ENCODE measurements at regions of chr3 and their contacts with region 1.

Region 1: DNA sequence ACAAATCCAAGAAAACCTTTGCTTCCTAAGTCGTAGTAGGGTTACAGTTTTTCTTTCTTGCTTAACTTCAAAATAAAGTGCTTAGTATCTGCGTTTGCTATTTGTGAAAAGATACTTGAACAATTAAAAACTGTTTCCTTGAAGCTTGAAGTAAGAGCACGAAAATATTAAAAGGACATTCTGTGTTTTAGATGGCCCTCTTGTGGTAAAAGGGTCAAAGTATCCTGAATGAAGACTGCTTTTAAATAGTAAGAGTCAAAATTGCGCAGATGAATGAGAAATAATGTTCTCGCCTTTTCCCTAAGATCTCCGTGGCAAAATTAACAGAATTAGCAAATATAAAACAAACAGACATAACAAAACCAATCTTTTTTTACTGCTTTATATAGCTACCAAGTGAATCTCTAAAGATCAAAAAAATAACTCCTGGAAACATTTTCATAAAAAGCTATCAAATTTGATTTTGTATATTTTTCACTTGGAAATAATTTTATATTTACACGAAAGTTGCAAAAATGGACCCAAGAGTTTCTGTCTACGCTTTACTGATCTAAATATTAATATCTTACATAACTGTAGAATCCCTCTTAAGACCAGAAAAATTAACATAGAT is 175.4 kb downstream of the MBNL1 start:
- DNase-seq: peak; percentile 42
- ATAC-seq: peak; percentile 42; the same call in 1 of the 3 replicates
- H3K4me3 ChIP-seq: no peak overlapping the region
- H3K27ac ChIP-seq: no peak overlapping the region
- H3K4me1 ChIP-seq: no peaks in the 10 kb centered on the region
- H3K27me3 ChIP-seq: no peaks in the 10 kb centered on the region
- CTCF ChIP-seq: peak; percentile 65
- EP300 ChIP-seq: no peak
- POLR2A ChIP-seq: no peak
- RAD21 ChIP-seq: peak; percentile 34; the same call in 1 of the 2 replicates

Region 2: GRCh38 chr3:152071924-152072323 is 372.2 kb before region 1 on chr3:
- CTCF ChIA-PET with region 1: no interaction called
- POLR2A ChIA-PET with region 1: no interaction called
- in situ Hi-C with region 1: no loop called
- intact Hi-C with region 1: loop called (anchors 1 kb)
- DNase-seq: peak; percentile 19
- ATAC-seq: peak; percentile 77
- H3K4me3 ChIP-seq: no peak overlapping the region
- H3K27ac ChIP-seq: no peak overlapping the region
- H3K4me1 ChIP-seq: no peaks in the 10 kb centered on the region
- H3K27me3 ChIP-seq: no peaks in the 10 kb centered on the region
- CTCF ChIP-seq: peak; percentile 54
- EP300 ChIP-seq: no peak
- POLR2A ChIP-seq: no peak
- RAD21 ChIP-seq: no peak

Region 3: GRCh38 chr3:152183473-152183872 is 260.7 kb before region 1 on chr3:
- CTCF ChIA-PET with region 1: interaction called, 28 read pairs
- POLR2A ChIA-PET with region 1: no interaction called
- in situ Hi-C with region 1: loop called (anchors 10 kb)
- intact Hi-C with region 1: loop called (anchors 1 kb)
- DNase-seq: peak; percentile 54
- ATAC-seq: peak; percentile 96
- H3K4me3 ChIP-seq: no peak overlapping the region
- H3K27ac ChIP-seq: no peak overlapping the region
- H3K4me1 ChIP-seq: no peaks in the 10 kb centered on the region
- H3K27me3 ChIP-seq: no peaks in the 10 kb centered on the region
- CTCF ChIP-seq: peak; percentile 80
- EP300 ChIP-seq: no peak
- POLR2A ChIP-seq: no peak
- RAD21 ChIP-seq: peak; percentile 86

Region 4: GRCh38 chr3:152229692-152230091 is 214.4 kb before region 1 on chr3:
- CTCF ChIA-PET with region 1: interaction called, 6 read pairs
- POLR2A ChIA-PET with region 1: no interaction called
- in situ Hi-C with region 1: no loop called
- intact Hi-C with region 1: loop called (anchors 1 kb)
- DNase-seq: peak; percentile 18
- ATAC-seq: peak; percentile 60; the same call in 2 of the 3 replicates
- H3K4me3 ChIP-seq: no peak overlapping the region
- H3K27ac ChIP-seq: no peak overlapping the region
- H3K4me1 ChIP-seq: no peaks in the 10 kb centered on the region
- H3K27me3 ChIP-seq: no peaks in the 10 kb centered on the region
- CTCF ChIP-seq: peak; percentile 51
- EP300 ChIP-seq: no peak
- POLR2A ChIP-seq: no peak
- RAD21 ChIP-seq: no peak

Region 5: GRCh38 chr3:152298393-152299242 is 145.5 kb before region 1 on chr3:
- CTCF ChIA-PET with region 1: no interaction called
- POLR2A ChIA-PET with region 1: no interaction called
- in situ Hi-C with region 1: no loop called
- intact Hi-C with region 1: loop called (anchors 10 kb)
- DNase-seq: peak; percentile 97
- ATAC-seq: peak; percentile 90
- H3K4me3 ChIP-seq: peak overlapping the region; percentile 39 to 70 (median 46)
- H3K27ac ChIP-seq: peak overlapping the region; percentile 97
- H3K4me1 ChIP-seq: peaks cover 78% of the 10 kb centered on the region
- H3K27me3 ChIP-seq: no peaks in the 10 kb centered on the region
- CTCF ChIP-seq: no peak
- EP300 ChIP-seq: peak in 1 of 2 experiments; percentile 23; a peak in 1 of 4 replicates
- POLR2A ChIP-seq: peak; percentile 23 to 89; a peak in 2 of 4 replicates
- RAD21 ChIP-seq: no peak